Activated naive CD4-positive, alpha-beta T cell treated with anti-CD3 and anti-CD28 coated beads for 36 hours (primary cell): ENCODE measurements at regions of chr16 and their contacts with region 1.

Region 1: DNA sequence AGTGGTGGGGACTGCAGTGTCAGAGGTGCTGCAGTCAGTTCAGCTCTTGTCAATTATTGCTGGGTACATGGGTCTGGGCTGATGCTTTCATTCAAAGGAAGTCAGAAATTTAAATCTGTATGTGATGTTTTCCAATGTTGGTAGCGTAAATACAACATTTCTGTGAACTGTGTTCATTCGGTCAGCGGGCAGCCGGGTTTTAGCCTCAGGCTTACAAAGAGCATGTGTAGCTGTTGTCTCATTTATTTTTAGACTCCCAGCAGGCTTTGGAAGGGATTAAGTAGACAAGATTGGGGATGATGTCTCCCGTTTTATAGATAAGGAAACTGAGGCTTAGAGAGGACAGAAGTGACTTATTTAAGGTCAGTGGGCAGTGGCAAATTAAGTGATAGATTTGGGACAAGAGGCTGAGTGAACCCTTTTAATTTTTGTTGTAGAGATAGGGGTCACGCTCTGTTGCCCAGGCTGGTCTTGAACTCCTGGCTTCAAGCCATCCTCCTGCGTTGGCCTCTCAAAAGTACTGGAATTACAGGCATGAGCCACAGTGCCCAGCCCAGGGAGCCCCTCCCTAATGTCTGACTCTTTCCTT is 8.1 kb downstream of the AQP8 start:
- DNase-seq: no peak
- H3K4me3 Mint-ChIP-seq: no peak overlapping the region
- H3K27ac Mint-ChIP-seq: no peak overlapping the region
- H3K4me1 Mint-ChIP-seq: no peaks in the 10 kb centered on the region
- H3K27me3 Mint-ChIP-seq: no peaks in the 10 kb centered on the region

Region 2: DNA sequence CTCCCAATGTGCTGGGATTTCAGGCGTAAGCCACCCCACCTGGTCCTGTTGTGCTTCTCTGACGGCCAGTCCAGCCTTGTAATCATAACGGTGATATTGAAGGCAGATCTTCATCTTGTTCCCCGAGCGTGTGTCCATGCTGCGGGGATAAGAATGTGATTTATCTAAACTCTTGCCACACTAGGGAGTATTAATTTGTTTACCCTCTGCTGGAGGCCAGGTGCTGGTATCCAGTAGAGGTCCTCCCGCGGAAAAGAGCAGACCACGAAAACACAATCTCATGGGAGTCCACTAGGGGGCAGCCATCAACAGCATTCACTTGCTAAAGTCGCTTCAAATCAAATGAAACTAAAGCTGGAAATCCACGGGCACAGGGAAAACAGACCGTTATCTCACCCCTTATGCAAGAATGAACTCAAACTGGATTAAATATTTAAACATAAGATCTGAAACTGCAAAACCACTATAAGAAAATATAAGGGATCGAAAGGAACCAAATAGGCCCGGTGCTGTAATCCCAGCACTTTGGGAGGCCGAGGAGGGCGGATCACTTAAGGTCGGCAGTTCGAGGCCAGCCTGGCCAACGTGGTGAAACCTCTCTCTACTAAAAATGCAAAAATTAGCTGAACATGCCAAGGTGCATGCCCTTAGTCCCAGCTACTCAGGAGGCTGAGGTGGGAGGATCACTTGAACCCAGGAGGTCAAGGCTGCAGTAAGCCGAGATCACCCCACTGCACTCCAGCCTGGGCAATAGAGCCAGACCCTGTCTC is 707.7 kb before region 1 on chr16:
- CTCF ChIA-PET with region 1: interaction called, 3 read pairs
- intact Hi-C with region 1: loop called (anchors 10 kb)
- DNase-seq: peak; percentile 91
- H3K4me3 Mint-ChIP-seq: peak overlapping the region; percentile 46
- H3K27ac Mint-ChIP-seq: peak overlapping the region; percentile 36
- H3K4me1 Mint-ChIP-seq: peaks cover 4% of the 10 kb centered on the region
- H3K27me3 Mint-ChIP-seq: no peaks in the 10 kb centered on the region

Region 3: DNA sequence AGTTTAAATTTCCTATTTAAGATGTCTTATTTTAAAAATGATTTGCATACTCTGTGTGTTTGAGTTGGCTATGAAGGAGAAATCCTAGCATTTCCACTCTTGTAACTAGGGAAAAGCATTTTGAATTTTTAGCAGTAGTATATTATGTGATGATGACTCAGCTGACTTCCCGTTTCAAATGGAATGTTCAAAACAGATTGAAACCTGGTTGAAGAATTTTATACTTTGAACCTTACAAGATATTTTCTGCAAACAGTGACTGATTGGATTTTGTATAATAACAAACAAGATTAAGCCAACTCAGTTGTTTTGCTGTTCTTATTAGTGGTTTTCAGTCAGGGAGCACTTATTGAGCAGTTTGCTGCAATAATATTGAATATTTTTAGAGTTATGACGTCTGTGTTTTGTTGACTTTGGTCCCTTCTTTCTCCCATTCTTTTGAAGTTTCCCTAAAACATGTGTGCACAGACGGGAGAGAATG is 487.4 kb before region 1 on chr16:
- CTCF ChIA-PET with region 1: no interaction called
- intact Hi-C with region 1: no loop called
- DNase-seq: no peak
- H3K4me3 Mint-ChIP-seq: no peak overlapping the region
- H3K27ac Mint-ChIP-seq: no peak overlapping the region
- H3K4me1 Mint-ChIP-seq: peaks cover 90% of the 10 kb centered on the region
- H3K27me3 Mint-ChIP-seq: no peaks in the 10 kb centered on the region

Region 4: DNA sequence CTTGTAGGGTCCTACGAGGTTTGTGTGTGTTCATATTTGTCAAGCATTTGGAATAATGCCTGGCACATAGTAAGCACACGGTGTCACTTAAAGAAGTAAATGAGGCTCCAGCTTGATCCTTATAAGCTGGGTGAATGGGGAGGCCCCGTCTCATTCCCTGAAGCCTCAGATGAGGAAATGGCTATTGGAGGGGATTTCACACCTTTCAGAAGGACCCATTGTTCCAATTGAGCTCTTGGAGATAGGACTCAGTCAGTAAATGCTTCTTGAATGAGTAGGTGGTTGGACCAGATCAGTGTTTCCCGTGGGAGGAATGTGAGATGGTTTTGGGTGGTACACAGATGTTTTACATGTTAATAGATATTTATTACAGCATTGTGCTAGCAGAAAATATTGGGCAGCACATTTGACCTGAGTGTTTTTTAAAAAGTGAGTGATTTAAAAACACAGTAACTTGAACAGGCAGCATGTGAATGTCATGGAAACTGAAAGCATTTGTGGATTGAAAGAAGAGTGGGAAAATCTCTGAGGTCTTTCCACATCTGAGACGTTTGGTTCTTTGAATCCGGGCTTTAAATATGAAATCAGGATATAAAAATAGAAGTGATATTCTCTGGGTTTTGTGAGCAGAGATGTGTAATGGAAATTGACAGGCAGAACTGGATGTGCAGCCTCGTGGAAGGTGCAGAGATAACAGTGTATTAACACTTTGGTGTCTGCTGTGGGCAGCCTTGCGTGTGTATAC is 173.2 kb before region 1 on chr16:
- CTCF ChIA-PET with region 1: interaction called, 15 read pairs
- intact Hi-C with region 1: loop called (anchors 1 kb)
- DNase-seq: peak; percentile 39
- H3K4me3 Mint-ChIP-seq: peak overlapping the region; percentile 53
- H3K27ac Mint-ChIP-seq: peak overlapping the region; percentile 74
- H3K4me1 Mint-ChIP-seq: peaks cover 66% of the 10 kb centered on the region
- H3K27me3 Mint-ChIP-seq: no peaks in the 10 kb centered on the region

Region 5: DNA sequence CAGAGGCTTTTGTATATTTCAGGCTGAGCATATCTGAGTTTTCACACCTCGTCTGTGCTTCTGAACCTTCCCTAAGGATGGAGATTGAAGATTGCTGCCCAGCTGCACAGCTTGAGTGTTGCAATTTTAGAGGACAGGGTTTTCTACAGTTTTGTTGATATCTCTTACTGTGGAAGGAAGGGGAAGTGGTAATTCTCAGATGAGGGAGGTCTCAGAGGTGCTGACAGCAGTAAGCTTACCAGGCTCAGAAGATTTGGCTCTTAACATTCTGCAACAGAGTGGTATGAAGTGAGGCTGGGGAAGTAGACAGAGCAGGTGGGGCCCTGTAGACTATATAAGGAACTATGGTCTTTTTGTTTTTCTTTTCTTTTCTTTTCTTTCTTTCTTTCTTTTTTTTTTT is 163.9 kb before region 1 on chr16:
- CTCF ChIA-PET with region 1: interaction called, 15 read pairs
- intact Hi-C with region 1: no loop called
- DNase-seq: no peak
- H3K4me3 Mint-ChIP-seq: no peak overlapping the region
- H3K27ac Mint-ChIP-seq: peak overlapping the region; percentile 14
- H3K4me1 Mint-ChIP-seq: peaks cover 53% of the 10 kb centered on the region
- H3K27me3 Mint-ChIP-seq: no peaks in the 10 kb centered on the region

Region 6: GRCh38 chr16:25126820-25127232 is 98.0 kb before region 1 on chr16:
- CTCF ChIA-PET with region 1: interaction called, 68 read pairs
- intact Hi-C with region 1: loop called (anchors 1 kb)
- DNase-seq: peak; percentile 73
- H3K4me3 Mint-ChIP-seq: no peak overlapping the region
- H3K27ac Mint-ChIP-seq: no peak overlapping the region
- H3K4me1 Mint-ChIP-seq: peaks cover 36% of the 10 kb centered on the region
- H3K27me3 Mint-ChIP-seq: no peaks in the 10 kb centered on the region

Region 7: GRCh38 chr16:25235991-25236390 is 11.2 kb after region 1 on chr16:
- CTCF ChIA-PET with region 1: interaction called, 29 read pairs
- intact Hi-C with region 1: no loop called
- DNase-seq: no peak
- H3K4me3 Mint-ChIP-seq: no peak overlapping the region
- H3K27ac Mint-ChIP-seq: no peak overlapping the region
- H3K4me1 Mint-ChIP-seq: no peaks in the 10 kb centered on the region
- H3K27me3 Mint-ChIP-seq: no peaks in the 10 kb centered on the region